PC-9 (cell line): ENCODE measurements at regions of chr16 and their contacts with region 1.

Region 1: DNA sequence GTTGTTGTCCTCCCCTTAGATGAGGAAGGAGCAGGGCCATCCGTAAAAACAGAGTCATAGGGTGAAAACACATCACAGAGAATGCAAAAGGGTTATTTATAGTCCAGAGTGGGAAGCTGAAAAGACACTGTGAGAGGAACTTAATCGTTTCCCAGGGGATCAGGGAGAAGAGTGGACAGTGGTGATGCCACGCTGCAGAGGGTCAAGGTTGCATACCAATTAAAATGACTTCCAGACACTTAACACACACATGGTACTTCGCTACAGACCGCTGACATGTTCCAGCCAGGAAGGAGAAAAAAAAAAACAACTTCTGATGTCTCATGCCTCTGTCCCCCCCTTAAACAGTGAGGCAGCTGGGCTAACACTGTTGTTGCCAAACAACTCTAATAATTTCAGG is 713.8 kb upstream of the RBFOX1 start:
- DNase-seq: no peak
- H3K4me3 ChIP-seq: no peak overlapping the region
- H3K27ac ChIP-seq: no peak overlapping the region
- H3K4me1 ChIP-seq: no peaks in the 10 kb centered on the region
- H3K27me3 ChIP-seq: peaks cover 24% of the 10 kb centered on the region
- CTCF ChIP-seq: no peak

Region 2: GRCh38 chr16:4780235-4780634 is 1838.6 kb before region 1 on chr16:
- CTCF ChIA-PET with region 1: interaction called, 10 read pairs
- POLR2A ChIA-PET with region 1: no interaction called
- intact Hi-C with region 1: no loop called
- DNase-seq: no peak
- H3K4me3 ChIP-seq: no peak overlapping the region
- H3K27ac ChIP-seq: no peak overlapping the region
- H3K4me1 ChIP-seq: no peaks in the 10 kb centered on the region; the same call in 1 of the 2 replicates
- H3K27me3 ChIP-seq: no peaks in the 10 kb centered on the region
- CTCF ChIP-seq: no peak